ENCODE measurements at regions of chr18 and their contacts with region 1.

Region 1: DNA sequence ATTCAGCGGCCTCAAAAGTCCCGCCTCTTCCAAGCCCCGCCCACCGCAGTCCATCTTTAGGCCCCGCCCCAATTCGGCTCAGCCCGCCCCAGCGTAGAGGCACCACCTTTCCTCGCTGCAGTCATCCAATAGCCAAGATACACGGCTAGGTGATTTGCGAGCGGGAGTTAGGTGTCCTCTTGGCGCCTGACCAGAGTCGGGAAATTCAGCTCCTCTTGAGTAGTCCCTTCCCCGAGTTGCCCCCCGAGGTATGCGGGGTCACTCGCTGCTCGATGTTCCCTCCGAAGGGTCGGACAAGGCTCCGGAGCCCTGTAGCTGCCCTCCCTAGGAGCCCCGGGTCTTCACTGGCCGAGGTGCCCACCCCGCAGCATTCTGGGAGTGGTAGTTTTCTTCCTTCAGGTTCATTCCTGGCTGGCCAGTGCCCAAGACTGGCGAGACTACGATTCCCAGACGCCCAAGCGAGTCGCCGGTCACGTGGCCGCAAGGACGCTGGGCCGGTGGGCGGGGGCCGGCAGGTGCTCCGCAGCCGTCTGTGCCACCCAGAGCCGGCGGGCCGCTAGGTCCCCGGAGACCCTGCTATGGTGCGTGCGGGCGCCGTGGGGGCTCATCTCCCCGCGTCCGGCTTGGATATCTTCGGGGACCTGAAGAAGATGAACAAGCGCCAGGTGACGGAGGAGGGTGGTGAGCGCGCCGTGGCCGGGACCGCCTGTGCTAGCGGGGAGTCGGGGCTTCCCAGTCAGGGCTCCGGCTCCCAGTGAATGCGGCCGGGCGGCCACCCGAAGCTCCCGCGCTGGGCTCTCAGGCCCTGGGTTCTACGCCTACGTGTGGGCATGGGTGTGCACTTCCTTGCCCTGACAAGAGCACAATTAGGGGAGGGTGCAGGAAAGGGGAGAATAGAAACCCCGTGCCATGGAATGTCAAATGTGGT is at the start of gene SEC11C:
- DNase-seq: peak; percentile 96 to 97
- ATAC-seq: peak; percentile 97 to 98
- H3K4me3 ChIP-seq: peak within 1 kb of the TSS; percentile 81 to 99 (median 88)
- H3K27ac ChIP-seq: peak within 1 kb of the TSS; percentile 84 to 93 (median 90)
- H3K4me1 ChIP-seq: peaks cover 6 to 20% of the 10 kb centered on the region in 2 donors
- H3K27me3 ChIP-seq: no peaks in the 10 kb centered on the region
- CTCF ChIP-seq: no peak
- POLR2A ChIP-seq: peak; percentile 26 to 46
- total RNA-seq, gene SEC11C: 7.7 to 17.1 (median 13.1) TPM

Region 2: DNA sequence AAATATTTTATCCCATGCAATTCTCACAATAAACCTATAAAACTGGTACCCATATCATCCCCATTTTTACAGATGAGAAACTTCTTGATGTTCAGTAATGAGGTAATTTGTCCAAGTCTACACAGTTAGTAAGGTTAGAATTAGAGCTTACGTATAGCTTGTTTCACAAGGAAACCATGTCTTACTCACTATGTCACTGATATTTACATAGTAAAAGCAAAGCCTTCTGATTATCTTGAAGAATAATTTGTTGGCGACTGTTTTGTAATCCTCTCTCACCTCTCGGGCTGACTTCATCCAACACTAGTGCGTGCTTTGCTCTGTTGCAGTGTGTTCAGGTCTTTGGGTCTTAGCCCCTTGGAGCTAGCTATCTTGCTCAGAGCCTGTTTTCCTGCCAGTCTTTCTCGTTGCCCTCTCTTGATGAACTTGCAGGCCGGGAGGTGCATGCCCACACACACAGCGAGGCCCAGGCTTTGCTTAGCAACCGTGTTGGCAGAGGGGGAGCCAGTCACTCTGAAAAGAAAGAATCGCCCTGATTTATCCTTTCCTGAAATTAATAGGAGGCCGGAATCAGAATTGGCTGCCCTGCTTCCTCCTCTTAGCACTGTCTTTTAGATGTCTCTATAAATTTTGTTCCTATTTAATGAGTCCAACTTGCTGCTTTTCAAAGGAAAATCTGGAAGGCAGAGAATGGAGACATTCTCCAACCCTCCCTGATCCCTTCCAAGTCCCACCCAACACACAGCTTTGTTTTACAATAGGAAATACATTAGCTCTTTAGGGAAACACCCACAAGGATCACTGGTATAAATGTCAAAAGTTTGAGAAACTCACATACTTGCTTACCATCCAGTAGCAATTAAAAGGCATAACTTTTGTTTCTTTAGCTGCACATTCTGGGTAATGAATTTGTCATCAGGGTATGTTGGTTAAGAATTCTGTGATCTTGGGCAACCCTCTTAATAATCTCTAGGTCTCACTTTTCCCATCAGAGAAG is 97.5 kb before region 1 on chr18:
- in situ Hi-C with region 1: loop called in 1 of 4 experiments (anchors 25 kb)
- intact Hi-C with region 1: no loop called
- DNase-seq: no peak
- ATAC-seq: peak; percentile 35 to 46
- H3K4me3 ChIP-seq: no peak overlapping the region
- H3K27ac ChIP-seq: peak overlapping the region; percentile 1 to 47 (median 38)
- H3K4me1 ChIP-seq: peaks cover 5 to 11% of the 10 kb centered on the region in 2 donors
- H3K27me3 ChIP-seq: no peaks in the 10 kb centered on the region
- CTCF ChIP-seq: no peak
- POLR2A ChIP-seq: no peak

Region 3: DNA sequence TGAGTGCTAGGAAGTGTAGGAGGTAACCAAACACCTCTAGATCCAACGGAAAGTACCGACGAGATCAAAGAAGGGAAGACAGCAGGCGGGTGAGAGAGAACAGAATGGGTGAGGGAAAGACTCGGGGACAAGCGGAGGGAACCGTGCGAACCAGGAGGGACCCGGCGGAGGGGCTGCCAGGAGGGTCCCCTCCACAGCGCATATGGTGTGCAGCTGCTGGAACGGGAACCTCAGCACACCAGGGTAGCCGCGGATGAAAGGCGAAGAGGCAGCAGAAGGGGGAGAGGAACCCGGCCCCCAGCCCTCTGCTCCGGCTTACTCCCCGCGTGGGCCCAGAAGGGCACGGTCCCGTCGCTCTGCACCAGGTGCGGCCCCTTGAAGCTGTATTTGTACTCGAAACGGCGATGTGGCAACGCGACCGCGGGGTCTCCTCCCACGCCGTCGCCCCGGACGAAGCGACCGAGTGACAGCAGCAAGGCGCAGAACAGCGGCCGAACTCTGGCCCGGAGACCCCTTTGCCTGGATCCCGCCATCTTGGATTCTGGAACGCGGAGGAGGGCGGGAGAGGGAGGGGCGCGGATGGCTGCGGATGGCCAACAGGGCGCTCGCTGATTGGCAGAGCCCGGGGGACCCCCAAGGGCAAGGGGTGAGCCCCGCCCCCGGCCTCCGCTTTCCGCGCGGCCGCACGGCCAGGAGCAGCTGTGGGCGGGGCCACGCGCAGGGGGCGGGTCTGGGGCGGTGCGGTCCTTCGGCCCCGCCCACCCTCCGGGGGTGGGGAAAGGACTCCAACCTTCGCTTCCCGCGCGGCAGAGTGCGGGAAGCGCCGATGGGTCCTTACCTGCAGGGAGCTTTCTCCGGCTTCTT is 219.3 kb after region 1 on chr18 and contains the start of gene LMAN1:
- in situ Hi-C with region 1: loop called in 1 of 4 experiments (anchors 10 kb)
- intact Hi-C with region 1: loop called (anchors 1 kb)
- DNase-seq: peak; percentile 92 to 93
- ATAC-seq: peak; percentile 88 to 90
- H3K4me3 ChIP-seq: peak within 1 kb of the TSS; percentile 91 to 96 (median 94)
- H3K27ac ChIP-seq: peak within 1 kb of the TSS; percentile 91 to 98 (median 96)
- H3K4me1 ChIP-seq: peaks cover 18 to 25% of the 10 kb centered on the region in 2 donors
- H3K27me3 ChIP-seq: no peaks in the 10 kb centered on the region
- CTCF ChIP-seq: no peak
- POLR2A ChIP-seq: peak; percentile 56 to 58
- total RNA-seq, gene LMAN1: 48.6 to 74.8 (median 59.2) TPM

Measured in gastrocnemius medialis (tissue), 4 donors.